ENCODE measurements at regions of chr6 and their contacts with region 1.

Region 1: DNA sequence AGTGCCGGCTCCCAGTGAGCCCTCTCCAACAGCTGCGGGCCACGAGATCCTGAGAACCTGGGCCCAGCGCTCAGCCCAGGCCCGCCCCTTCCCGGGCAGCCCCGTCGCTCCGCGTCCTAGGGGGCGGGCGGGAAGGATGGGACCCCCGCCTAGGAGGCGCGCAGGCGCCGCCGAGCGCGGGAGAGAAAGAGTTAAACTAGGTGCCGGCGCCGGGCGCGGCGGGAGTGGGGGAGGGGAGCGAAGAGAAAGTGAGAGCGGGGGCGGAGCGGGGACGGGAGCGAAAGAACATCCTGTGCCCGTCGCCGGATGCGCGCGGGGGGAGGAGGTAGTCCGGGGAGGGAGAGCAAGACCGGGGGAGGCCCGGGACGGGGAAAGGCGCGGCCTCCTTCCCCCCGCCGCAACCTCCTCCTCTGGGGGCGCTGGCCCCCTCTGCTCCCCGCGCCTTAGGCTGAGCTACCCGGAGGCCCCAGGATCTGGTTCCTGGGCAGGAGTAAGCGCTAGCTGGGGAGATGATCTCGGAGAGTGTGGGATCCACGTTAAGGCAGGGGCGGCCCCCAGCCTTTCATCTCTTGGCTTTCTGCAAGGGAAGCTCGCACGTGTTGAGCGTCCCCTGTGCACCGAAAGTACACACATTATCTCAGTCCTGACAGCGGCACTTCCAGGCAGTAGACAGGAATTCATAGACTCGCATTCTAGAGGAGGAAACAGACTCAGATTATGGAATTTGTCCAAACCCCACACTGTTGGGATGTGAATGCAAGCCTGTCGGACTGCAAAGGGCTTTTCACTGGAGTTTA is 4.9 kb upstream of the ARMC12 start:
- DNase-seq: peak; percentile 97
- H3K4me3 Mint-ChIP-seq: peak overlapping the region; percentile 81
- H3K27ac Mint-ChIP-seq: peak overlapping the region; percentile 89
- H3K4me1 Mint-ChIP-seq: peaks cover 78% of the 10 kb centered on the region
- H3K27me3 Mint-ChIP-seq: no peaks in the 10 kb centered on the region

Region 2: DNA sequence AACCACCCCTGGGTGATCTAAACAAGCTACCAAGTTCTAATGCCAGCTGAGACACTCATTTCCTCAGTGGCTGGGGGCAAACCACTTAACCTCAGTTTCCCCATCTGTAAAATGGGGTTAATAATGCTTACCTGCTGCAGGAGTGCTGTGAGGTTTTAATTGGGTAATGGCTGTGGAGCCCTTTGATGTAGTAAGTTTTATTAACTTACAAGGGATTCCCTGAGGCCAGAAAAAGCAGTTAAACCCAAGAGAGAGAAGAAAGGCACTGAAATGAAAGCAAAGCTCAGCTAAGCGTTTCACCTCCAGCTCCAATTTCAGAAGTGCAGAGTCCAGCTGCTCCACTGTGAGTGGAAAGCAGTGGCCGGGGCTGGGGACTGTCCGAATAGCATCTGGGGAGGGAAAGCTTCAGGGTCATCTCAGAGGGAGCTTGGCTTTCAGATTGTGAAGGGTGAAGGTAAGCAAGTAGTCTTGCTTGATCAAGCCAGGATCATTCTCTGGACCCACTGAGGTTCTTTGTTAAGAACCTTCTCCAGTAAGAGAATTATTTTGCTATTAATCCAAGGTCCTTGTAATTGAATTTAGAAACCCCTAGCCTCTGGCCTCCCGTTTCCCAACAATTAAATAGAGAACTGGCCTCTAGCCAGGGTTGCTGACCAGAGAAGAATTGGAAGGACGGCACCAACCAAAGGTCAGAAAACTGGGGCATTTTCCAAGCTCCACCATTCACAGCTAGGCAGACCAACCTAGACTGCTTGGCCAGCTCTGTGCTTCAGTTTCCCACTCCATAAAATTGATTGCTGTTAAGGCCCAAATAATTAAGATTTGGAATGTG is 569.9 kb before region 1 on chr6:
- CTCF ChIA-PET with region 1: no interaction called
- POLR2A ChIA-PET with region 1: no interaction called
- intact Hi-C with region 1: no loop called
- DNase-seq: no peak
- H3K4me3 Mint-ChIP-seq: no peak overlapping the region
- H3K27ac Mint-ChIP-seq: no peak overlapping the region
- H3K4me1 Mint-ChIP-seq: peaks cover 4% of the 10 kb centered on the region
- H3K27me3 Mint-ChIP-seq: peaks cover 5% of the 10 kb centered on the region

Region 3: GRCh38 chr6:35468181-35468979 is 263.6 kb before region 1 on chr6 and contains the start of gene RPL10A:
- CTCF ChIA-PET with region 1: no interaction called
- POLR2A ChIA-PET with region 1: no interaction called
- intact Hi-C with region 1: loop called (anchors 1 kb)
- DNase-seq: peak; percentile 97
- H3K4me3 Mint-ChIP-seq: peak within 1 kb of the TSS; percentile 95
- H3K27ac Mint-ChIP-seq: peak within 1 kb of the TSS; percentile 97
- H3K4me1 Mint-ChIP-seq: peaks cover 36% of the 10 kb centered on the region
- H3K27me3 Mint-ChIP-seq: no peaks in the 10 kb centered on the region
- total RNA-seq, gene RPL10A: 2,144 to 2,205 TPM

Region 4: DNA sequence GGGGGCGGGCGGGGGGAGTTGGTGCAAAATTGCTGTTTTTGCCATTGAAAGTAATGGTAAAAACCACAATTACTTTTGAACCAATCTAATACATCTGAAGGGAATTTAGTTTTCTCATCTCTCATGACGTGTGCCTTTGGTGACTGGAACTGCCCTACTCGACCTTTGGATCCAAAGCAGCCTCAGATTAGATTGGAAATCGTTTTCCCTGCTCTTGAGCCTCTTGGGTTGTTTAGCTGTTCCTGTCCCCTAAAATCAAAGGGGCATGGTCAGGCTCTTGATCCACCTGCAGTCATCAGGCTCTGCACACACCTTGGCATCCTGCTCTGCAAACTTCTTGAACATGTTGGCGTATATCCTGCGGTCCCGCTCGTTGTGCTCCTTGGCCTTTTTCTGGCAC is 155.3 kb before region 1 on chr6:
- CTCF ChIA-PET with region 1: interaction called, 210 read pairs
- POLR2A ChIA-PET with region 1: interaction called, 3 read pairs
- intact Hi-C with region 1: no loop called
- DNase-seq: no peak
- H3K4me3 Mint-ChIP-seq: no peak overlapping the region
- H3K27ac Mint-ChIP-seq: no peak overlapping the region
- H3K4me1 Mint-ChIP-seq: peaks cover 6% of the 10 kb centered on the region
- H3K27me3 Mint-ChIP-seq: no peaks in the 10 kb centered on the region

Region 5: DNA sequence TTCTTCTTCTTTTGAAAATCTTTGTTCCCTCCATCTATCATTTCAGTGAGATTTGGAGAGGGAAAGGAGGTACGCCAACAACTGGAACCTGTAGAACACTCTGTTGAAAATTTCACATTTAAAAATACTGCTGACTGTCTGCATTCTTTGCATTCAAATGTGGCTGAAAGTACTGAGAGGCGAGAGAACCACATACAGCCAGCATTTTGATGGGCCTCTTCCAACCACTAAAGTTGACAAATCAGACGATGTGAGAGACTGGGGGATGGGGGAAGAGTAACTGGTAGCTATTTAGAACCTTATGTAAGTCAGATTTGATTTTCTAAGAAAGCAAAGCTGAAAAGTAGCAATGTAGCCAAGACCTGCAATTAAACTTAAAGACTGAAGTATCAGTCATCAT is 120.7 kb before region 1 on chr6:
- CTCF ChIA-PET with region 1: interaction called, 10 read pairs
- POLR2A ChIA-PET with region 1: no interaction called
- intact Hi-C with region 1: no loop called
- DNase-seq: peak; percentile 59
- H3K4me3 Mint-ChIP-seq: no peak overlapping the region
- H3K27ac Mint-ChIP-seq: peak overlapping the region; percentile 47
- H3K4me1 Mint-ChIP-seq: peaks cover 58% of the 10 kb centered on the region
- H3K27me3 Mint-ChIP-seq: no peaks in the 10 kb centered on the region

Region 6: GRCh38 chr6:35654883-35655282 is 77.1 kb before region 1 on chr6:
- CTCF ChIA-PET with region 1: interaction called, 11 read pairs
- POLR2A ChIA-PET with region 1: interaction called, 3 read pairs
- intact Hi-C with region 1: no loop called
- DNase-seq: no peak
- H3K4me3 Mint-ChIP-seq: no peak overlapping the region
- H3K27ac Mint-ChIP-seq: no peak overlapping the region
- H3K4me1 Mint-ChIP-seq: peaks cover 31% of the 10 kb centered on the region
- H3K27me3 Mint-ChIP-seq: no peaks in the 10 kb centered on the region

Region 7: GRCh38 chr6:35688581-35689322 is 43.2 kb before region 1 on chr6 and contains the start of gene FKBP5:
- CTCF ChIA-PET with region 1: interaction called, 45 read pairs
- POLR2A ChIA-PET with region 1: interaction called, 22 read pairs
- intact Hi-C with region 1: loop called (anchors 1 kb)
- DNase-seq: peak; percentile 93
- H3K4me3 Mint-ChIP-seq: peak within 1 kb of the TSS; percentile 92
- H3K27ac Mint-ChIP-seq: peak within 1 kb of the TSS; percentile 86
- H3K4me1 Mint-ChIP-seq: peaks cover 15% of the 10 kb centered on the region
- H3K27me3 Mint-ChIP-seq: no peaks in the 10 kb centered on the region
- total RNA-seq, gene FKBP5: 111 to 112 TPM

Region 8: GRCh38 chr6:35786810-35787209 is 54.9 kb after region 1 on chr6:
- CTCF ChIA-PET with region 1: no interaction called
- POLR2A ChIA-PET with region 1: no interaction called
- intact Hi-C with region 1: no loop called
- DNase-seq: no peak
- H3K4me3 Mint-ChIP-seq: no peak overlapping the region
- H3K27ac Mint-ChIP-seq: no peak overlapping the region
- H3K4me1 Mint-ChIP-seq: no peaks in the 10 kb centered on the region
- H3K27me3 Mint-ChIP-seq: peaks cover 42% of the 10 kb centered on the region

Region 9: DNA sequence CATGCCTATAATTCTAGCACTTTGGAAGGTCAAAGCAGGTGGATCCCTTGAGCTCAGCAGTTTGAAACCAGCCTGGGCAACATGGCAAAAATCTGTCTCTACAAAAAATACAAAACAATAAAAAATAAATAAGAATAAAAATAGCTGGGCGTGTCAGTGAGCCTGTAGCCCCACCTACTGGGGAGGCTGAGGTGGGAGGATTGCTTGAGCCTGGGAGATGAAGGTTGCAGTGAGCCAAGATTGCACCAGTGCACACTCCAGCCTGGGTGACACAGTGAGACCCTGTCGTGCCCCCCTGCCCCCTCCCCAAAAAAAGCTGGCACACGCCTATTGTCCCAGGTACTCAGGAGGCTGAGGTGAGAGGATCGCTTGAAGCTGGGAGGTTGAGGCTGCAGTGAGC is 224.0 kb after region 1 on chr6:
- CTCF ChIA-PET with region 1: interaction called, 10 read pairs
- POLR2A ChIA-PET with region 1: no interaction called
- intact Hi-C with region 1: no loop called
- DNase-seq: peak; percentile 35
- H3K4me3 Mint-ChIP-seq: no peak overlapping the region
- H3K27ac Mint-ChIP-seq: no peak overlapping the region
- H3K4me1 Mint-ChIP-seq: peaks cover 14% of the 10 kb centered on the region
- H3K27me3 Mint-ChIP-seq: peaks cover 8% of the 10 kb centered on the region